RWPE1 (cell line): ENCODE measurements at regions of chr20 and their contacts with region 1.

Region 1: DNA sequence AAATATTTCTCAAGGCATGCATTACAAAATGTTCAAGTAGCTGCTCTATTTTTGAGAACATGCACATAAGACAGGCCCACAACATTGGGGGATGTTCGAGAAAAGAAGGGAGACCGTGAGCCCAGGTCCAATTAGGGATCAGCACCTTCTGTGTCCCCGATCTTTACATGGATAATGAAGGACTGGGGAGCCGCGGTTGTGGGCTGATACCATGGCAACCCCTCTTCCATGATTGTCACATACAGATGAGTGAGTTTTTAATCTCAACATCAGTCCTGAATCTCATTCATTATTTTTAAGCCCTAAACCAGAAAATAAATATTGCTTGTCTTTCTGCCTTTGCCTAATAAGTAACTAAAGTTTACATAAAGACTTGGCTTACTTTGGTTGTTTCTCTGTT is 935.7 kb downstream of the KIF16B start:
- DNase-seq: no peak
- H3K27ac ChIP-seq: no peak overlapping the region
- CTCF ChIP-seq: no peak

Region 2: GRCh38 chr20:13771853-13772453 is 1865.6 kb before region 1 on chr20:
- CTCF ChIA-PET with region 1: interaction called, 10 read pairs
- POLR2A ChIA-PET with region 1: no interaction called
- DNase-seq: peak; percentile 21
- H3K27ac ChIP-seq: no peak overlapping the region
- CTCF ChIP-seq: peak; percentile 76